IMR-90 (cell line): ENCODE measurements at regions of chr11 and their contacts with region 1.

Region 1: GRCh38 chr11:120682866-120683265 is 171.3 kb downstream of the GRIK4 start:
- DNase-seq: peak; percentile 82
- ATAC-seq: peak; percentile 85
- H3K4me3 ChIP-seq: no peak overlapping the region
- H3K27ac ChIP-seq: no peak overlapping the region
- H3K4me1 ChIP-seq: peaks cover 3% of the 10 kb centered on the region; the same call in 1 of the 2 replicates
- H3K27me3 ChIP-seq: peaks cover 10% of the 10 kb centered on the region
- CTCF ChIP-seq: no peak
- POLR2A ChIP-seq: no peak
- RAD21 ChIP-seq: no peak

Region 2: GRCh38 chr11:120696597-120697218 is 13.8 kb after region 1 on chr11:
- CTCF ChIA-PET with region 1: interaction called, 12 read pairs
- POLR2A ChIA-PET with region 1: no interaction called
- dilution Hi-C with region 1: no loop called
- in situ Hi-C with region 1: no loop called
- intact Hi-C with region 1: no loop called
- DNase-seq: no peak
- ATAC-seq: no peak
- H3K4me3 ChIP-seq: no peak overlapping the region
- H3K27ac ChIP-seq: no peak overlapping the region
- H3K4me1 ChIP-seq: no peaks in the 10 kb centered on the region
- H3K27me3 ChIP-seq: peaks cover 14% of the 10 kb centered on the region
- CTCF ChIP-seq: no peak
- POLR2A ChIP-seq: no peak
- RAD21 ChIP-seq: no peak

Region 3: DNA sequence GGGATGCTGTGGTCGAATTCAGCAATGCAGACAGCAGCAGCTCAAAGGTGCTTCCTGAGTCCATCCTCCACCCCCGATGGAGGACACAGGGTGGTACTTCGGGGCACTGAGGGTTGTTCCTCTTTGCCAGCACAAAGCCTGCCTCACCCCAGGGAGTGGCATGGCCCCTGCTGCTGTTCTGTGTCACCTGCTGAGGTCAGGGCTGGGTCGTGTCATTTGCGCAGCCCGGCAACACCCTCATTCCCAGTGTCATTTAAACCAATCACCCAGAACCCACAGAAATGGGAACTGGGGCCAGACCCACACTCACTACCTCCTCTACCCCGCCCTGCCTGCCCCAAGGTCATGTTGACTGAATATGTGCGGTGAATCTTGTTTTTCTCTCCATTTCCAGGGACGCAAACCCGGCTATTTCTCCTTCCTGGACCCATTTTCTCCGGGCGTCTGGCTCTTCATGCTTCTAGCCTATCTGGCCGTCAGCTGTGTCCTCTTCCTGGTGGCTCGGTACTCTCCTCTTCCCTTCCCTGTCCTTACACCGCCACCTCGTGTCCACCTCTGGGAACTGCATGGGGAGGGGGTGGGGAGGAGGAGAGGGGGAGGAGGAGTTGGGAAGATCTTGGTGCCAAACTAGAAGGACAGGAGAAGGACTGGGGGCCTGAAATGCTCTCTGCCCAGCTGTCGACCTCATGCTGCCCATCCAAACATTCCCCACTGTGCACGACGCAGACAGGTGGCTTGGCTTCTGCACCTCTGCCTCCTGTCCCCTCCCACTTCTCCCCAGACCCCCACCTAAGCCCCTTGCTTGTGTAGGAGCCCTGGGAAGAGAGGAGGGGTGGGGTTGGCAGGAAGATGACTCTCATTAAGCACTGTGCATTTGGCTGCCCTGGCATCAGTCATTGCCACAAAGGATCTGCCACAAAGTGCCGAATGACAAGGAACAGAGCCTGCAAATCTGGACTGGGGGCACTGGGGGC is 269.9 kb after region 1 on chr11:
- CTCF ChIA-PET with region 1: interaction called, 3 read pairs
- POLR2A ChIA-PET with region 1: no interaction called
- dilution Hi-C with region 1: no loop called
- in situ Hi-C with region 1: no loop called
- intact Hi-C with region 1: loop called (anchors 2 kb)
- DNase-seq: peak; percentile 64
- ATAC-seq: peak; percentile 100
- H3K4me3 ChIP-seq: no peak overlapping the region
- H3K27ac ChIP-seq: no peak overlapping the region
- H3K4me1 ChIP-seq: no peaks in the 10 kb centered on the region
- H3K27me3 ChIP-seq: peaks cover 8% of the 10 kb centered on the region
- CTCF ChIP-seq: peak; percentile 74
- POLR2A ChIP-seq: no peak
- RAD21 ChIP-seq: peak; percentile 81